ENCODE measurements at regions of chr11 and their contacts with region 1.

Region 1: DNA sequence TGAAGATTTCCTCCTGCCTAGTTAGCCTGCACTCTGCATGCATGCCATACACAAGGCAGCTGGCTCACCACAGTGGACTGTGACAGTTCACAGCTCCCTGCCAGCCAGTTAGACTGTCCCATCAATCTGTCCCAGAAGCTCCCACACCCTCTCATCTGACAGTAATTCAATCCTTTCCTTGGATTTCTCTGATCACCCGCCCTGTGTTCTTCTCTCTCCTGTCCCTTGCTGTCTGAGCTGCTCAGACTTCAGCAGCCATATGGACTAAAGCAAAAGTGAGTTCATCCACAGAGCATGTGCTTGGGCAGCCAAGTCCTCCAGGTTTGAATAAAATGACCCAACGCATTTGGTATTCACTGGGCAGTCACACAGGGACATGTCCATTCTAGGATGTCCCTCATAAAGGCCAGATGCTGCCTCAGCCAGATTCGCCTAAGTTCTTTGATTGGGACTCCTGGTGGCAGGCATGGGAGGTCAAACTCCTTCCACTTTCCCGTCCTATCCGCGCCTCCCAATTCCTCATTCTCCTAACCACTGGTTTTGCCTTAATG is 54.5 kb upstream of the ZBTB44 start:
- DNase-seq: peak; percentile 73 to 88
- ATAC-seq: peak; percentile 96 to 99
- H3K4me3 ChIP-seq: no peak overlapping the region
- H3K27ac ChIP-seq: peak overlapping the region; percentile 57 to 76 (median 72)
- H3K4me1 ChIP-seq: peaks cover 16 to 28% of the 10 kb centered on the region in 2 donors
- H3K27me3 ChIP-seq: no peaks in the 10 kb centered on the region
- CTCF ChIP-seq: peak in 4 of 5 experiments; percentile 18 to 59 (median 40)
- POLR2A ChIP-seq: no peak

Region 2: DNA sequence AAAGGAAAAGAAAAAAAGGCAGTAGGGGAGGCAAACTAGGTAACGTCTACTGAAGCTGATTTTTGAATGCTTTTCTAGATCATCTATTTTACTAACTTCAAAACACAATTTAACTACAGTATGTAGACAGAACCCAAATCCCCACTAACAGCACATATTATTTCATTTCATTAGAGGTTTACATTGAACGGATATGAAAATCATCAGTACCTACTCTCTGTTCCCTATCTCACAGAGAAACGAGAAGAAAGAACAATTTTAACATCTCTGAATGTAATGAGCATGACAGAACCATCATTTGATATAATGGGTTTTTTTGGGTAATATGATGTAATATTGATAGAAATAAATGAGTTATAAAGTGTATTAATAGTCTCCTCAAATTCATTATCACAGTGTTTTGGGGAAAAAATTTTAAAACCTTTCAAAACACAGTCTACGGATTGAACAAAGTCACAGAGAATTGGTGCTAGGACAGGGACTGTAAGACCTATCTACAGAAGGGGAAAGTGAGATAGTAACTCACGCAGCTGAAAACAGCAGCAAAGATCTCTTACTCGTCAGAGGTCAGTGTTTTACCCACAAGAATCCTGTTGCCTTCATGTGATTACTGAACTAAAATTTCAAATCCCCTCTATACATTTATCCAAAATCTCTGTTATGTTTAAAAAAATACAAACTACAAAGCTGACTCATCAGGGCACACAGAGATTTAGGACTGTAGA is 131.8 kb before region 1 on chr11:
- in situ Hi-C with region 1: no loop called
- intact Hi-C with region 1: no loop called
- DNase-seq: no peak
- ATAC-seq: no peak
- H3K4me3 ChIP-seq: no peak overlapping the region
- H3K27ac ChIP-seq: no peak overlapping the region
- H3K4me1 ChIP-seq: no peaks in the 10 kb centered on the region
- H3K27me3 ChIP-seq: no peaks in the 10 kb centered on the region
- CTCF ChIP-seq: no peak
- POLR2A ChIP-seq: no peak

Region 3: DNA sequence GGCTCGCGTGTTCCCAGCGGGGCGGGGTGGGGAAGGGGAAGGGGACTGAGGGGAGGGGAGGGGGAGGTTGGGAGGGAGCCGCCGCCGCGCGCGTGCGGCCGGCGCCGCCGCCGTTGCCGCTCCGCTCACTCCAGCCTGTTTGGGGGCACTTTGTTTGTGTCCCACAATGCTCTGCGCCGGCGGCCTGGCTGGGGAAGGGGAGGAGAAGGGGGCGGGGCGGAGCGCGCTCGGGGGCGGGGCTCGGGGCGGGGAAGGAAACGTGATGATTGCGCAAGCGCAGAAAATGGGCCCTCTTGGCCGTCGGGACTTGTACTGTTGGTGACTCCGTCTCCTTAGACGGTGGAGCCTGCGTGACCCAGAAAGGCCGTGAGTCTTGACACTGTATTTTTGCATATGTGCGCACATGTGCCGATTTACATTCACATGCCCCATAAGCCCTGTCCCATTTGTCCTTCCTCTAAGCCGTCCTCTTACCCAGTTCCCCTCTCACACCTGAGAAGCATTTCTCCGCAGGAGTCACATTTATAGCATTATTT is 54.4 kb before region 1 on chr11 and contains the start of gene ZBTB44:
- in situ Hi-C with region 1: no loop called
- intact Hi-C with region 1: loop called (anchors 1 kb)
- DNase-seq: peak; percentile 88 to 91
- ATAC-seq: peak; percentile 83 to 86
- H3K4me3 ChIP-seq: peak within 1 kb of the TSS; percentile 79 to 90 (median 86)
- H3K27ac ChIP-seq: peak within 1 kb of the TSS; percentile 93 to 99 (median 95)
- H3K4me1 ChIP-seq: peaks cover 28 to 42% of the 10 kb centered on the region in 2 donors
- H3K27me3 ChIP-seq: no peaks in the 10 kb centered on the region
- CTCF ChIP-seq: no peak
- POLR2A ChIP-seq: no peak
- total RNA-seq, gene ZBTB44: 57.4 to 108 (median 68.8) TPM

Region 4: GRCh38 chr11:130383344-130384211 is 14.4 kb after region 1 on chr11:
- in situ Hi-C with region 1: no loop called
- intact Hi-C with region 1: loop called (anchors 1 kb)
- DNase-seq: peak; percentile 55 to 81
- ATAC-seq: peak; percentile 95 to 98
- H3K4me3 ChIP-seq: no peak overlapping the region
- H3K27ac ChIP-seq: peak overlapping the region; percentile 74 to 83 (median 82)
- H3K4me1 ChIP-seq: peaks cover 12 to 29% of the 10 kb centered on the region in 2 donors
- H3K27me3 ChIP-seq: no peaks in the 10 kb centered on the region
- CTCF ChIP-seq: no peak
- POLR2A ChIP-seq: peak in 1 of 2 donors; percentile 31